ENCODE measurements at regions of chr1 and their contacts with region 1.

Region 1: GRCh38 chr1:9721606-9722377 is 70.3 kb downstream of the PIK3CD start:
- DNase-seq: peak; percentile 91
- ATAC-seq: peak; percentile 43
- H3K4me3 Mint-ChIP-seq: peak overlapping the region; percentile 49
- H3K27ac Mint-ChIP-seq: peak overlapping the region; percentile 63
- H3K4me1 Mint-ChIP-seq: peaks cover 70% of the 10 kb centered on the region
- H3K27me3 Mint-ChIP-seq: no peaks in the 10 kb centered on the region
- CTCF ChIP-seq: peak; percentile 83

Region 2: DNA sequence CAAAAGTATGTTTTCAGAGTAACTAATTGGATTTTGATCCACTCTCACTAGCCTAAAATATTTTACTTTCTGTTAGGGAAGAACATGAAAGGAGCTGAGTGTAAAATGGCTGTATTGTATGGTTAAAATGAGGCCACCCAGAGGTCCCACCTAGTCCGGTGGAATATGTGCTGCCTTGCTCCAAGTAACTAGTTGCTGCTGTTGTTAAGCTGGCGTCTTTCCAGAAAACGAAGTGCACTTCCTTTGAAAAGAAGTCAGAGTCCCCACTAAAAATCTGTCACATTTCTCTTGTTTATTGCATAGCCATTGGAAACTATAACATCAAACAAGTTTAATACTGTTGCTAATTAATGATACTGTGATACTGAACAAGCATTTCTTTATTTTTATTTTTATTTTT is 179.4 kb before region 1 on chr1:
- CTCF ChIA-PET with region 1: no interaction called
- POLR2A ChIA-PET with region 1: no interaction called
- intact Hi-C with region 1: no loop called
- DNase-seq: no peak
- ATAC-seq: no peak
- H3K4me3 Mint-ChIP-seq: peak overlapping the region; percentile 1
- H3K27ac Mint-ChIP-seq: no peak overlapping the region
- H3K4me1 Mint-ChIP-seq: peaks cover 39% of the 10 kb centered on the region
- H3K27me3 Mint-ChIP-seq: no peaks in the 10 kb centered on the region
- CTCF ChIP-seq: no peak

Region 3: DNA sequence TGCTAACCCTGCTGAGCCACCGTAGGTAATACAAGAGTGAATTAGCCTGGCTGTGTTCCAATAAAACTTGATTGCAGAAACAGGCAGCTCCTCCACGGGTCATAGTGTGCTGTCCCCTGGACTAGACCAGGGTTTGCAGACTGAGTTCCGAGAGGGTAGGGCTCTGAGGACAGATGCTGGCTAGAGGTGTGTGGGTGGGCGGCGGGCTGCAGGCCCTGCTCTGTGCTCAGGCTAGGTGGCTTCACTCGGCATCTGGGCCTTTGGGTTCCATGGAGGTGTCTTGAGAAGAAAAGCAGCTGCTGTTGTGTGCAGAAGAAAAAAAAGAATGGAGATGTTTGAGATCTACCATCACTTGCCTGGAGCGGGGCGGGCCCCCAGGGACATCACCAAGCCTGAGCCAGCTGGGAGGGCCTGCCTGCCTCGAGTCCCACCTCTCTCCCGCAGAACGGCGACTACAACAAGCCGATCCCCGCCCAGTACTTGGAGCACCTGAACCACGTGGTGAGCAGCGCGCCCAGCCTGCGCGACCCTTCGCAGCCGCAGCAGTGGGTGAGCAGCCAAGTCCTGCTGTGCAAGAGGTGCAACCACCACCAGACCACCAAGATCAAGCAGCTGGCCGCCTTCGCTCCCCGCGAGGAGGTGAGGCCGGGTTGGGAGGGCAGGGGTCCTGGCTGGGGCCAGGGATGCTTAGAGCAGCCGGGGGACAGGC is 125.2 kb before region 1 on chr1:
- CTCF ChIA-PET with region 1: no interaction called
- POLR2A ChIA-PET with region 1: no interaction called
- intact Hi-C with region 1: no loop called
- DNase-seq: no peak
- ATAC-seq: no peak
- H3K4me3 Mint-ChIP-seq: no peak overlapping the region
- H3K27ac Mint-ChIP-seq: no peak overlapping the region
- H3K4me1 Mint-ChIP-seq: peaks cover 19% of the 10 kb centered on the region
- H3K27me3 Mint-ChIP-seq: no peaks in the 10 kb centered on the region
- CTCF ChIP-seq: no peak

Region 4: GRCh38 chr1:9651565-9652378 is 70.0 kb before region 1 on chr1 and contains the start of gene PIK3CD:
- CTCF ChIA-PET with region 1: interaction called, 7 read pairs
- POLR2A ChIA-PET with region 1: interaction called, 64 read pairs
- intact Hi-C with region 1: loop called (anchors 5 kb)
- DNase-seq: peak; percentile 59
- ATAC-seq: peak; percentile 34
- H3K4me3 Mint-ChIP-seq: peak within 1 kb of the TSS; percentile 95
- H3K27ac Mint-ChIP-seq: peak within 1 kb of the TSS; percentile 96
- H3K4me1 Mint-ChIP-seq: peaks cover 61% of the 10 kb centered on the region
- H3K27me3 Mint-ChIP-seq: no peaks in the 10 kb centered on the region
- CTCF ChIP-seq: no peak
- total RNA-seq, gene PIK3CD: 152 to 158 TPM

Region 5: DNA sequence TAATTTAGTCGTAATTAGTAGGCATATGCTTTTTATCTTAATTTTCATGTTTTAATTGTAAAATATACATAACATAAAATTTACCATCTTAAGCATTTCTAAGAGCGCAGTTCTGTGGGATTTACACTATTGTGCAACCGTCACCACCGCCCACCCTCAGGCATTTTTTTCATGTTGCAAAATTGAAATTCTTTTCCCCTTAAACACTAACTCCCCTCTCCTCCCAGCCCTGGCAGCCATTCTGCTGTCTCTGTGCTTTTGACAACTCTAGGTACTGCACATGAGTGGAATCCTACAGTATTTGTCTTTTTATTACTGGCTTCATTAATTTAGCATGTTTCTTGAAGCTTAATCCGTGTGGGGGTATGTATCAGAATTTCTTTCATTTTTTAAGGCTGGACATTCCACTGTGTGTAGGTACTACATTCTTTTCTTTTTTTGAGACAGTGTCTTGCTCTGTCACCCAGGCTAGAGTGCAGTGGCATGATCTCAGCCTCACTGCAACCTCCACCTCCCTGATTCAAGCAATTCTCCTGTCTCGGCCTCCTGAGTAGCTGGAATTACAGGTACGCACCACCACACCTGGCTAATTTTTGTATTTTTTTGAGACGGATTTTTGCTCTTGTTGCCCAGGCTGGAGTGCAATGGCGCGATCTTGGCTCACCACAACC is 62.3 kb before region 1 on chr1:
- CTCF ChIA-PET with region 1: interaction called, 7 read pairs
- POLR2A ChIA-PET with region 1: interaction called, 64 read pairs
- intact Hi-C with region 1: loop called (anchors 5 kb)
- DNase-seq: peak; percentile 28
- ATAC-seq: no peak
- H3K4me3 Mint-ChIP-seq: peak overlapping the region; percentile 25
- H3K27ac Mint-ChIP-seq: peak overlapping the region; percentile 80
- H3K4me1 Mint-ChIP-seq: peaks cover 72% of the 10 kb centered on the region
- H3K27me3 Mint-ChIP-seq: no peaks in the 10 kb centered on the region
- CTCF ChIP-seq: no peak

Region 6: DNA sequence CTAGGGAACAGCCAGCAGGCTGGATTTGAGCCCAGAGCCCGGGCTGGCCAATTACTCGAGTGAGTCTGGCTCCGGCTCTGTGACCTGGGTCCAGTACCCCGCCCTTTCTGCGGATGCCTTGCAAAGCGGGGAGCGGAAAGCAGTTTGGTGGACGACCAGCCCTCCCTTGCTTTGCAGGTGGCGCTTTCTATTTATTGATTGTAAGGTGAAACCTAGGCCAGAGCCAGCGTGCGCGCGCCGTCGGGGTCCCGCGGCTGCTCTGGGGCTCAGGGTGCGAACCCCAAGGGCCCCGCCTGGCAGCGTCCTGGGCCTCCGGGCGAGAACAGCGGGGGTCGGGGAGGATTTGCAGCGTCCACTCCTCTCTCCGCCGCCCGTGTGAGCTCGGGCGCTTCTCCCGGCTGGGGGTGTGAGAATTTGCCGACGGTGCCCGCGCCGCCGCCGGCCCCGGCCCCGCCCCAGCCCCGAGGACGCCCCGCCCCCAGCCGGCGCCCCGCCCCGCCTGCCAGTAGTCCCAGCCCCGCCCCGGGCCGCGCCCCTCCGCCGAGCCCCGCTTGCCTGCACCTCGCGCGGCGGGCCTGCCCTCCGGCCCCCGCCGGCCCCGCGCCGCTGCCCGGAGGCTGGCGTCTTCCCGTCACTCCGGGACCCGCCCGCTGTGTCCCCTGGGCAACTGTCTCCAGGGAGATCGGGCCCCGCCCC is 32.6 kb before region 1 on chr1:
- CTCF ChIA-PET with region 1: interaction called, 9 read pairs
- POLR2A ChIA-PET with region 1: interaction called, 73 read pairs
- intact Hi-C with region 1: no loop called
- DNase-seq: peak; percentile 89
- ATAC-seq: peak; percentile 74
- H3K4me3 Mint-ChIP-seq: peak overlapping the region; percentile 77
- H3K27ac Mint-ChIP-seq: peak overlapping the region; percentile 71
- H3K4me1 Mint-ChIP-seq: peaks cover 70% of the 10 kb centered on the region
- H3K27me3 Mint-ChIP-seq: no peaks in the 10 kb centered on the region
- CTCF ChIP-seq: no peak

Region 7: DNA sequence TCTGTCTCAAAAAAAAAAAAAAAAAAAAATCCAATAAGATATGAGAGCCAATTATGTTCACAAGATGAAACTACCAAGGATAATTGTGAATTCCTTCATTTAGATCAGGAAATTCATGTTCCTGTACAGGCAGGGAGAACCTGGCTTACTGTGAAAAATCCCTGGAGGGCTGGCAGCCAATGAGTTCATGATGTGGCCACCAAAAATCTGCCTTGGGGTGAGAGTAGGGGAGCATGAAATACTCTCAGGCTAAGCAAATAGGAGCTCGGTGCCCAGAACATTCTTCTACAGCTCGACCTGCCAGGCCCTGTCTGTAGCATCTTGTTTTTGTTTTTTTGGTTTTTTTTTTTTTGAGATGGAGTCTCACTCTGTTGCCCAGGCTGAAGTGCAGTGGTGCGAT is 20.1 kb before region 1 on chr1:
- CTCF ChIA-PET with region 1: interaction called, 13 read pairs
- POLR2A ChIA-PET with region 1: interaction called, 19 read pairs
- intact Hi-C with region 1: no loop called
- DNase-seq: no peak
- ATAC-seq: no peak
- H3K4me3 Mint-ChIP-seq: no peak overlapping the region
- H3K27ac Mint-ChIP-seq: no peak overlapping the region
- H3K4me1 Mint-ChIP-seq: peaks cover 68% of the 10 kb centered on the region
- H3K27me3 Mint-ChIP-seq: no peaks in the 10 kb centered on the region
- CTCF ChIP-seq: no peak

Region 8: GRCh38 chr1:9793291-9793690 is 71.5 kb after region 1 on chr1:
- CTCF ChIA-PET with region 1: no interaction called
- POLR2A ChIA-PET with region 1: no interaction called
- intact Hi-C with region 1: no loop called
- DNase-seq: no peak
- ATAC-seq: no peak
- H3K4me3 Mint-ChIP-seq: no peak overlapping the region
- H3K27ac Mint-ChIP-seq: no peak overlapping the region
- H3K4me1 Mint-ChIP-seq: peaks cover 30% of the 10 kb centered on the region
- H3K27me3 Mint-ChIP-seq: no peaks in the 10 kb centered on the region
- CTCF ChIP-seq: no peak